HEK293 (cell line): ENCODE measurements at regions of chr3 and their contacts with region 1.

Region 1: DNA sequence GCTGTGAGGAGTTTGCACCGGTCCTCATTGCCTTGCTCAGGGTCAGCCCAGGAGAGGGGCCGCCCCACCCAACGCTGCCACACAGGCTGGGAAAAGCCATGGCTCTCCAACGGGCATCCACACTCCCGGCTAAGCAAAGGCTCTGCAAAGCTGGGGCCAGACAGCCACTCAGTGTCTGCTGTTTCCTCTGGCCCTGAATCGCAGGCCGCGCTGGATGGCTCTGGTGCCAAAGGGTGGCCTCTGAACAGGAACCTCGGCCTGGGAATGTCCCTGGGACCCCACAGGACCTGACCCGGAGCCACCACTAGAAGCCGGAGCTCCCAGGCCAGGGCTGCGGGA is 42.9 kb downstream of the RPN1 start:
- H3K4me3 ChIP-seq: no peak overlapping the region
- H3K27ac ChIP-seq: no peak overlapping the region
- H3K4me1 ChIP-seq: no peaks in the 10 kb centered on the region
- CTCF ChIP-seq: no peak

Region 2: DNA sequence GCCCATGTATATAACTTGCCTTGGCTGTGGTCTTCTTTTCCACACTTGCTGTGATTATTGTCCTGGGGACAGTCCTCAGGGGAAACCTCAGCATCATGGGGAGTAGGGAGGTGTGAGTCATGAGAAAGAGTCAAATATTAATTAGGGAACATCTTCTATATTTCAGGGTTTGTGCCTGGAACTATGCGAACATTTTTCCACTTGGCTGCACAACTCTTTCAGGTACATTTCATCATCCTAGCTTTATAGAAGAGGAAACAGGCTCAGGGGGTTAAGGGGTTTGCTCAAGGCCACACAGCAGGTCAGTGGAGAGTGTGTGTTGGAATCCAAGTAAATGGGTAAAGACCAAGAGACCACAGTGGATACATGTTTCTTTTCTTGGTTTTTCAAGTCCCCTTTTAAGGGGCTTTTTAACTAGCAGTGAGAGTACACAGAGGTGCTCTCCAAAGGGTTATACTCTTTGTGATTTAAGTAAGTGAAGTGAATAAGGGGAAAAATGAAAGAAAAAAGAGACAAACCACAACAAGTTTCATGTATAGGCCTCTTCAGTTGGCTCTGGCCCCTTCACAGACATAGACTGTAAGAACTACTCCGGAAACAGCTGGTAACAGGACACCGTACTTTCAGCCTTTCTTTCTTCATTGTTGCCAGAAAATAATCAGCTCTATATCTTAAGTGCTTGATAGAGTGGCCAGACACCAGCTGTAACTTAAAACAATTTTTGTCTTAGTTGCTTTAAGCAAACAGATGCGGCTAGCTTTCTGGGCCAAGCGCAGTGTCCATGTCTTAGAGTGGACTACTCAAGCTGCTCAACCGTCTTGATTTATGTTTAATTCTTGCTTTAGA is 389.8 kb before region 1 on chr3:
- CTCF ChIA-PET with region 1: no interaction called
- POLR2A ChIA-PET with region 1: no interaction called
- H3K4me3 ChIP-seq: no peak overlapping the region
- H3K27ac ChIP-seq: no peak overlapping the region
- H3K4me1 ChIP-seq: 0 out of 2 replicates have a peak, but pooled peaks cover 2% of the 10 kb centered on the region
- CTCF ChIP-seq: no peak

Region 3: DNA sequence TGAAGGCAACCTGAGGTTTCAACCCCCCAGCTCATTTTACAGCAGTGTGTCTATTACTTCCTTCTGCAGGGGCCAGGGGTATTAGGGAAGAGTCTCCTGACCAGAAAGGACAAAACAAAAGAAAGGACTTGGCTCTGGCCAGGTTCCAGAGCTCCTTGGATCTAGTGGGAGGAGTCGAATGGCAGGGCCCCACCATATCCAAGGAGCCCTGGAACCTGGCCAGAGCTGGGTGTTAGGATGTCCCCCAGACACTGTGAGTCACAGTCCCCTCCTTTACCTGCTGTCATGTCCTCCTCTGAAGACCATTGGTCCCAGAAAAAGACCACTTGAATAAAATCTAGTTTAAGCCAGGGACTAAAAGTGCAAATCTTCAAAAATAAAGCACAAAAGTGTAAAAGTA is 341.2 kb before region 1 on chr3:
- CTCF ChIA-PET with region 1: no interaction called
- POLR2A ChIA-PET with region 1: no interaction called
- H3K4me3 ChIP-seq: no peak overlapping the region
- H3K27ac ChIP-seq: no peak overlapping the region
- H3K4me1 ChIP-seq: peaks cover 7% of the 10 kb centered on the region; the same call in 1 of the 2 replicates
- CTCF ChIP-seq: no peak

Region 4: DNA sequence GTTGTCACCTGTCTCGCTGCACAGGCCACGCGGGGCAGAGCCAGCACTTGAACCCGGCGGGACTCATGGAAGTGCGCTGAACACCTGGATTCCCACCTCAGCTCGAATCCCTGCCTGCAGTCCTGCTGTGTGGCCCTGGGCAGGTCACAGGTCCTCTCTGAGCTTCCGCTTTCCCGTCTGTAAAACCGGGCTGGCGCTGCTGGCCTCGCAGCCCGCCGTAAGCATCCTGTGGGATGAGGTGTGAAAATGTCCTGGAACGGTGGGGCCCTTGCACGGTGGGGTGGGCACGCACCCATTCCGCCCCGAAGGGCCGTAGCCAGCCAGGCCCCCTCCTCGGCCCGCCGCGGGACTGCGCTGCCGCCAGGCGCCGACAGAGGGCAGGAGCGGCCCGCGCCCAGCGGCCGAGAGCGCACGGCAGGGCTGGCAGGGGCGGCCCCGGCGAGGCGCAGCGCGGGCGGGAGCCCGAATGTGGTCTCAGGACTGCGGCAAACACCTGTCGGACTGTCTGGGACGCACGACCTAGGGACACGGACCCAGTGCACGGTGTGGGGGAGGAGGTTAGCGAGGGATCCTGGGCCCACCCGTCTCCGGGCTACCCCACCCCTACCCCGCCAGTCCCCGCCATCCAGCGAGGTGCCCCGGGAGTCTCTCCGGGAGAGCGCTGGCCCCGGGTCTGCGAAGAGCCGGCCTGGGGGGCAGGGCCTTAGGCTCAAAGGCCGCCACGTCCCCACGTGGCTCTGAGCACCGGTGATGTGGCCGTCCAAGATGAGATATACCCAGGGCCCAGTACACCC is 181.4 kb before region 1 on chr3:
- CTCF ChIA-PET with region 1: interaction called, 13 read pairs
- POLR2A ChIA-PET with region 1: no interaction called
- H3K4me3 ChIP-seq: no peak overlapping the region
- H3K27ac ChIP-seq: no peak overlapping the region
- H3K4me1 ChIP-seq: no peaks in the 10 kb centered on the region
- CTCF ChIP-seq: no peak

Region 5: DNA sequence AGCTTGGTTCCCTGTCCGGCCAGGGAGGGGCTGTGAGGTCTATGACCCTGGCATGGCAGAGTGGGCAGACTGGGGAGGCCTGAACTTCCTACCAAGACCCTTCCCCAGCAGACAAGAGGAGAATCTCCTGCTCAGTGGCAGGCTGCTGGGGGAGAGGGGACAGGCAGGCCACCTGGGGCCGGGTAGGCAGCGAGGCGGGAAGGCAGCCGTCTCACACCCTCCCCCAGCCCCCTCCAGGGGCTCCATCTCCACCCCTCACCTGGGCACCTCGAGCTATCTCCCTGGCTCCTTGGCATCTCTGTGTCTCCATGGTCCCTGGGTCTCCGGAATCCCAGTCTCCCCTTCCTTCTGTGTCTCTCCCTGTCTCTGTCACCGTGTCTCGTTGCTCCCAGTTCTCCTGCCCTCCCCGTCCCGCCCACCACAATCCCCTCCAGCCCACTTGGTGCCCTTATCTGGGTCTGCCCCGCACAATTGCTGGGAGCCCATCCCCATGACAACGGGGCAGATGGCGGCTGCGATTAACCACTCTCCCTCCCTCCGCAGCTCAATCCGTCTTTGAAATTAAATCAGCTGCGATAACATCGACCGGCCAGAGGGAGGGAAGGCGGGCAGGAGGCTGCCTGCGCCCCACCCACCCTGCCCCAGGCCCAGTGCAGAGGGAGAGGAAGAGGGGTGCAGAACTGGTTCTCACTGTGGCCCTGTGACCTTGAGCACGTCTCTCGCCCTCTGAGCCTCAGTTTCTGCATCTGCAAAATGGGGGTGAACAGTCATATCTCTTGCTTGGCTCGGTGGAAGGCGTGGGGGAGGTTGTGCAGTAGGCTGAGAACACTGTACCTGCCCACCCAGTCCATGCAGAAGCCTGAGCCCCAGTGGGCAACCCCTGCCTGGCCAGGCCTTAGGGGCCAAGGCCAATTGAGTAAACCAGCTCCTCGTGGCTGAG is 150.6 kb before region 1 on chr3:
- CTCF ChIA-PET with region 1: no interaction called
- POLR2A ChIA-PET with region 1: no interaction called
- H3K4me3 ChIP-seq: no peak overlapping the region
- H3K27ac ChIP-seq: no peak overlapping the region
- H3K4me1 ChIP-seq: no peaks in the 10 kb centered on the region
- CTCF ChIP-seq: no peak

Region 6: GRCh38 chr3:128590948-128591347 is 16.7 kb before region 1 on chr3:
- CTCF ChIA-PET with region 1: interaction called, 10 read pairs
- POLR2A ChIA-PET with region 1: no interaction called
- H3K4me3 ChIP-seq: no peak overlapping the region
- H3K27ac ChIP-seq: no peak overlapping the region
- H3K4me1 ChIP-seq: no peaks in the 10 kb centered on the region
- CTCF ChIP-seq: no peak

Region 7: GRCh38 chr3:128617557-128618397 is 10.1 kb after region 1 on chr3:
- CTCF ChIA-PET with region 1: interaction called, 16 read pairs
- POLR2A ChIA-PET with region 1: interaction called, 3 read pairs
- H3K4me3 ChIP-seq: peak overlapping the region; percentile 77
- H3K27ac ChIP-seq: peak overlapping the region; percentile 84
- H3K4me1 ChIP-seq: no peaks in the 10 kb centered on the region
- CTCF ChIP-seq: peak; percentile 93